AG04449 (cell line): ENCODE measurements at regions of chr19 and their contacts with region 1.

Region 1: DNA sequence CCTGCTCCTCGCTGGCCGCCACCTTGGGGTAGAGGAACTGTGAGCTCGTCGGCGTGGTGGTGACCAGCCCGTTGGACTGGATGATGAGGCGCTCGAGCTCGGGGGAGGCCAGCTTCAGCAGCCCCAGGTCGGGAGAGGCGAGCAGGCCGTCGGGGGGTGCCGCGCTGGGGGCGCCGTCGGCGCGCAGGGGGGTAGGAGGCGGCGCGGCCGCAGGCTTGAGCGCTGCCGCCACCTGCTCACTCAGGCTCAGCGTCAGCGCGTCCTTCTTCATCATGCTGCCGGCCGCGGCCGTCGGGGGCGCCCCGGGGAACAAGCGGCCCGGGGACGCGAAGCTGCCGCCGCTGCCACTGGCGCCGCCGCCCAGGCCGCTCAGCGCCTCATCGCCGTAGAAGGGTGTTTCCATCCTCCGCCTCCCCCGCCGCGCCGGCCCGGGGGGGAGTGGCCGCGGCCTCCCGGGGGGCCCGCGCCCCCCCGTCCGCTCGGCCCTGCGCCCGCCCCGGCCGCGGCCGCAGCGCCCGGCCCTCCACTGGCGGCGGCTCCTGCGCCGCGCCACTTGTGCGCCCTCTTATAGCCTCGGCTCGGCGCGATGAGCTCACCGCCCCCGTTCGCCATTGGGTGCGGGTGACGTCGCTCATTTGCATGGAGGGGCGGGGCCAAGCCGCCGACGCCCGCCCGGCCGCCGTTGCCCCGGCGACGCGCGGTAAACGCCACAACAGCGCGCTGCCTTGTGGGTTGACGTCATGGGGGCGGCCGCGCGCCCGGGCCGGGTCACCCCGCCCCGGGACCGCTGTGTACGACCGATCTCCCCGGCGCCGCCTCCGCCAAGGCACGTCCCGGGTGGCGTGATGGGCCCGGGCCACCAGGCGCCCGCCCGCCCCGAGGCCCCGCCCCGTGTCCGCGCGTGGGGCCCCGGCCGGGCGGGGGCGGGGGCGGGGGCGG is at the start of gene JUND:
- DNase-seq: peak; percentile 72
- H3K4me3 ChIP-seq: peak within 1 kb of the TSS; percentile 94
- CTCF ChIP-seq: no peak

Region 2: GRCh38 chr19:18179957-18180356 is 101.4 kb before region 1 on chr19:
- CTCF ChIA-PET with region 1: no interaction called
- POLR2A ChIA-PET with region 1: no interaction called
- DNase-seq: no peak
- H3K4me3 ChIP-seq: no peak overlapping the region
- CTCF ChIP-seq: no peak

Region 3: GRCh38 chr19:18192673-18193387 is 88.5 kb before region 1 on chr19 and contains the start of gene MPV17L2:
- CTCF ChIA-PET with region 1: interaction called, 17 read pairs
- POLR2A ChIA-PET with region 1: interaction called, 7 read pairs
- DNase-seq: peak; percentile 100
- H3K4me3 ChIP-seq: peak within 1 kb of the TSS; percentile 77
- CTCF ChIP-seq: no peak

Region 4: GRCh38 chr19:18259893-18260292 is 21.5 kb before region 1 on chr19:
- CTCF ChIA-PET with region 1: interaction called, 15 read pairs
- POLR2A ChIA-PET with region 1: interaction called, 3 read pairs
- DNase-seq: no peak
- H3K4me3 ChIP-seq: no peak overlapping the region
- CTCF ChIP-seq: no peak

Region 5: DNA sequence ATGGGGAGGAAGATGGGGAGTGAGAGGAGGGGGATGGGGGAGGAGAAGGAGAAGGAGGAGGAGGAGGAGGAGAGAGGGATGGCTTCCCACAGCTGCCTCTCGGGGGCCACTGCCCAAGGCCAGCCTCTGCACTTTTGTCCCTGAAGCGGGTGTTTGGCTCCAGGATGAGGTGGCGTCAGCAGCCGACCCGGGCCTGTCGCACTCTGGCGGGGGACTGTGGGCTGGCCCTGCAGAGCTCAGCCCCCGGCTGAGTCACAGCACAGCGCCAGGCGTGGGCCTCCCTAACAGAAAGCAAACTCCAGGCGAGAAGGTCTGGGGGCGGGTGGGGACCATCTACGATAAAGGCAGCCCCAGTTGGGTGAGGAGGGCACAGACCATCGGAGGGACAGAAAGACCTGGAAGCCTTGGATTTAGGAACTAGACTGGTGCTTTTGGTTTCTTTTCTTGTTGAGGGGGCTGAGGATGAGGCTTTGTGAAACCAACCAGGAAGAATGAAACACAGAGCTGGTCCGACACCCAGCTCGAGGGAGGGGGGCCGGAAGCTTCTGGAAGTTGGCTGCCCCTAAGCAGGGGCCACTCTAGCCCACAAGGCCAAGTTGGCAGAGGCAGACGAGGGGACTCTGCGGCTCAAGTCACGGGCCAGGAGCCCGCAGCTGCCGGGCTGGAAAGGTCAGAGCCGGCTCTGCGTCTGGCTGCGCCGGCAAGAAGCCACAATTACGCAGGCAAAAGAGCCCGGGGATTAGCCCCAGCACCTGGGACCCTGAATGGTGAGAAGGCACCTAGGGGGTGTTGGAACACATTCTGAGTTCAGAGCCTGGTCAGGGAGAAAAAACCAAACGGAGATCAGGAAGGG is 23.3 kb after region 1 on chr19:
- CTCF ChIA-PET with region 1: interaction called, 65 read pairs
- POLR2A ChIA-PET with region 1: interaction called, 129 read pairs
- DNase-seq: no peak
- H3K4me3 ChIP-seq: peak overlapping the region; percentile 45
- CTCF ChIP-seq: no peak

Region 6: DNA sequence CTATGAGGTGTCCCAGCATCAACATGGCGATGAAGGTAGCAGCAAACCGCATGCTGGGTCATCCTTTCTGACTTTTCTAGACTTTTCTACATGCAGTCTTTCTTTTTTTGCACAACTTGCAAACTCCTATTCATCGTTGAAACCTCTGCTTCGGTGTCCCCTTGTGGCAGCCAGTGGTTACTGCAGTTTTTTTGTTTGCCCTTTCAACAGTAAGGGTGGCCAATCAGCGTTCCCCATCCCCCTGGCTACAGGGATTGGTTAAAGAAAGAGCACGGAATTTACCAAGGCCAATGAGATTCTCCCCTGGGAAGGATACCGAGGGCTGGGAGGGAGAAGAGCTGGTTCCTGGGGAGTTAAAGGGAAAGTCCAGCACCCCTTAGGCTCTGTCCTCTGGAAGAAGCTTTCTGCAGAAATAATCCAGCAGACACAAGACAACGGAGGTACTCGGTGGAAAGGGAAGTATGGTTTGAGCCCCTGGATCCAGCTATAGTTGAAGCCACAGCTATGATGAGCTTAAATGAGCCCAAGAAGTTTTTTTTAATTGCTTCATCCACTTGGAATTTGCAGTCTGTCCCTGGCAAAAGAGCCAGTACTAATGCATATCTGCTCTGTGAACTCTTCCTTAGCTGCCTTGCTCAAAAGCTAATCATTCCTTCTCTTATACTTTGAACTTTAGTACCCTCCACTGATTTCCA is 47.1 kb after region 1 on chr19:
- CTCF ChIA-PET with region 1: interaction called, 321 read pairs
- POLR2A ChIA-PET with region 1: interaction called, 87 read pairs
- DNase-seq: peak; percentile 87
- H3K4me3 ChIP-seq: peak overlapping the region; percentile 46
- CTCF ChIP-seq: peak; percentile 78

Region 7: DNA sequence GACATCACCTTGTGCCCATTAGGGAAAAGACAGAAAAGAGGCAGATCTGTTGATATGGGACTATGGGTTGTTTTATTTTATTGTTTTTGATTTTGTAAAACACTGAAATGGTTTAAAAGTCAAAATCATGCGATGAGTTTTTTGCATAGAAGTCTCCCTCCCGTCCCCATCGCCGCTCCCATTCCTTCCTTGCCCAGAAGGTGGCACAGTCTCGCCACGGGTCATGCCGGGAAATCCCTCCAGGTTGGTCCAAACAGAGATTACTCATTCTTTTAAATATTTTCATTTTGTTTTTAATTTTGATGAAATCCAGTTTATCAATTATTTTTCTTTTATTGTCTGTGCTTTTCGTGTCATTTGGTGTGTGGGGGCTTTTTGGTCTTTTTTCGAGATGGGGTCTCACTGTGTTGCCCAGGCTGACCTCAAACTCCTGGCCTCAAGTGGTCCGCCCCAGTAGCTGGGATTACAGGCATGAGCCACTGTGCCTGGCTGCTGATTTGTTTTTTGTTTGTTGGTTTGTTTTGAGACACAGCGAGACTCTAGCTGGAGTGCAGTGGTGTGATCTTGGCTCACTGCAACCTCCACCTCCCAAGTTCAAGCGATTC is 68.3 kb after region 1 on chr19:
- CTCF ChIA-PET with region 1: interaction called, 40 read pairs
- POLR2A ChIA-PET with region 1: interaction called, 3 read pairs
- DNase-seq: no peak
- H3K4me3 ChIP-seq: no peak overlapping the region
- CTCF ChIP-seq: peak; percentile 84

Region 8: DNA sequence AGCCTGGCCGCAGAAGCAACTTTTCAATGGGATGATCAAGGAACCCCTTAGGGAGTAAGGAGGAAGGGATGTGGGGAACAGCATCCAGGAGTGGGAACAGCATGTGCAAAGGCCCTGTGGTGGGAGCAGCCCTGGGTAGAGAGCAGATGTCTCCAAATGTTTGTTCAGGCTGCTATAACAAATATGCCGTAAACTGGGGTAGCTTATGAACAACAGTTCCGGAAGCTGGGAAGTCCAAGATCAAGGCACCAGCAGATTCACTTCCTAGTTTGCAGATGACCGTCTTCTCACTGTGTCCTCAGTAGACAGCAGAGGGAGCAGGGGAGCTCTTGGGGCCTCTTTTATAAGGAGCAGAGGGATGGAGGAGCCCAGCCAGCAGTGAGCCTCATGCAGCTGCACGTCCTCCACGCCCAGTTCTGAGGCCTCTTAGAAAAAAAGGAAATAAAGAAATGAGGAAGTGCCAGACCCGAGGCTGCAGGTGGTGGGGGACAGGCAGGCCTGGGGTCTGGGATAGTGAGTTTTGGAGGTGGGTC is 120.3 kb after region 1 on chr19:
- CTCF ChIA-PET with region 1: interaction called, 11 read pairs
- POLR2A ChIA-PET with region 1: interaction called, 4 read pairs
- DNase-seq: no peak
- H3K4me3 ChIP-seq: no peak overlapping the region
- CTCF ChIP-seq: peak; percentile 54